Heart right ventricle (tissue), 16 donors: ENCODE measurements at regions of chr19 and their contacts with region 1.

Region 1: GRCh38 chr19:45972081-45972946 is 1.4 kb downstream of the NOVA2 start:
- DNase-seq: peak in 1 of 2 donors; percentile 45
- ATAC-seq: peak; percentile 13 to 83 (median 62)
- H3K4me3 ChIP-seq: peak overlapping the region; percentile 25 to 63 (median 52)
- H3K27ac ChIP-seq: peak overlapping the region; percentile 58 to 93 (median 81)
- H3K4me1 ChIP-seq: peaks cover 0 to 25% (median 12%) of the 10 kb centered on the region in 9 donors
- H3K27me3 ChIP-seq: peaks cover 0 to 82% (median 59%) of the 10 kb centered on the region in 7 donors
- CTCF ChIP-seq: no peak

Region 2: DNA sequence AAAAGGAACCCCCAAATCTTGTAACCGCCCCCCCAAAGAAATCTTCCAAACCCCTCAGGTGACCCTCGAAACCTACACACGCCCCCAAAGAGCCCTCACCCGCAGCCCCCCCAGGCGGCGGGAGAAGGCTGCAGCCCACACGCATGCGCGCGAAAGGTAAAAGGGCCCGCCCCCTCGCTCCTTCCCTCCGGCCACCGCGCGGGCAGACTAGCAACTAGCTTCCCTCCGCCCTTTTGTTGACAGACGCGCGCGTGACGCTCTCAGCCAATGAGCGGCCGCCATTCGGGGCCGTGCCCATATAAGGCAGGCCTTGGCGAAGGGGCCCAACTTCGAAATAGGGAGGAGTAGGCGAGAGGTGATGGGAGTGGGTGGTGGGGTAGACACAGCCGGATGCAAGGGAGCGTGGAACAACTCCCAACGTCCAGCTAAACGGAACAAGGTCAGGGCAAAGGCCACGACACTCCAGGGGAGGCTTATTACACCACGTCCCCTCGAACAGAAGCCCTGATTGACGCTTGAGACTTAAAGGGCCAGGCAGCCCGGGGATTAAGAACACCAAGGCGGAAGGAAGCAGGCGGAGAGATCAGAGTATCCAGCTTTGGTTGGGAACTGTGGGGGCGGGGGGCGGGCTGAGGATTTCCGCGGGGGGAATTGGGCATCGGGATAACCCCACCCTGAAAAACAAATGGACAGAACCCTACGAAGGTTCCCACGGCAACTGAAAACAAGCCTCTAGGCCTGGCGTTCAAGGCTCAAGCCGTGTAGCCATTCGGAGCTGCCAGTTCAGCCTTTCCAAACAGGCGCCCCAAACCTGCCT is 254.9 kb before region 1 on chr19:
- intact Hi-C with region 1: no loop called
- DNase-seq: peak; percentile 99
- ATAC-seq: peak; percentile 97 to 99 (median 98)
- H3K4me3 ChIP-seq: peak overlapping the region; percentile 48 to 87 (median 64)
- H3K27ac ChIP-seq: peak overlapping the region; percentile 74 to 97 (median 94)
- H3K4me1 ChIP-seq: peaks cover 3 to 35% (median 20%) of the 10 kb centered on the region in 9 donors
- H3K27me3 ChIP-seq: no peaks in the 10 kb centered on the region
- CTCF ChIP-seq: peak in 5 of 9 donors; percentile 7 to 41 (median 14)

Region 3: DNA sequence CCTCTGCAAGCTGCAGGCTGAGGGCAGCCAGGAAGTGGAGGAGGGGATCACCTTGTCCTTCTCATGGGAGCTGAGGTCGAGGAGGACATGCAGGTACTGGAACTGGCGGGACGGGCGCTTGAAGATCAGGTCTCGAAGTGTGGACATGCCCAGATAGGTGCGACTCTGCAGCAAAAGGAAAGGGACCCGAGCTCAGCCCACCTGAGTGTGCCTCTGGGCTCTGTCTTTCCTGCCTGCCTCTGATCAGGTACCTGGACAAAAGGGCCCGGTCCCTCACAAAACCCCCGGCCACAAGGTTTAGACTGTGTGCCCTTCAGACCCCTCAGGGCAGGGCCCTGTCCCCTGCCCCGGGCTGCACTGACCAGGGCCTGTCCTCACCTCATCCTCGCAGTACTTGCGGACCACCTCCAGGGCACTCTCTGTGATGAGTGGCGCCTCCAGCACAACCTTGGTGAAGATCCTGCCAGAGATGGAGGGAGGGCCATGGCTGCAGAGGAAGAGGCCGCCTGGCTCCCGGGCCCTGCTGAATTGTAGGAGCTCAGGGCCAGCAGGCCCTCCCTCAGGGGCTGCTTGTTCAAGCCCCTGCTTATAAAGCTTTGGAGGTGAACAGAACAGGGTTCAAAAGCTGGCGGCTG is 144.7 kb before region 1 on chr19:
- intact Hi-C with region 1: no loop called
- DNase-seq: no peak
- ATAC-seq: no peak
- H3K4me3 ChIP-seq: no peak overlapping the region
- H3K27ac ChIP-seq: no peak overlapping the region
- H3K4me1 ChIP-seq: peaks cover 0 to 3% (median 0%) of the 10 kb centered on the region in 9 donors
- H3K27me3 ChIP-seq: no peaks in the 10 kb centered on the region
- CTCF ChIP-seq: no peak

Region 4: DNA sequence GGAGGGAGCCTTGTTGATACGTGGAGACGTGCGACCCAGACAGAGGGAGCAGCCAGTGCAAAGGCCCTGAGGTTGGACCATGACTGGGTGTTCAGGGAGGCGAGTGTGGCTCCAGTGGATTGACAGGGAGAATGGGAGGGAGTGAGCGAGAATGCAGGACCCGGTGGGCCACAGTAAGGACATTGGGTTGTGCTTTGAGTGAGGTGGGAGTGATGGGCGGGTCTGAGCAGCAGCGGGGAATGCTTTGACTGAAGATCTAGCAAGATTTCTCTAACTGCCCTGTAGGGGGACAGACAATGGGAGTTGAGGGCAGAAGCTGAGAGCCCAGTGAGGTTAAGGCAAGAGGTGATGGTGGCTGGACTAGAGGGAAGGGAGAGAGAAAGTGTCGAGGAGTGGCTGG is 50.0 kb before region 1 on chr19:
- intact Hi-C with region 1: loop called in 1 of 10 experiments (anchors 2 kb)
- DNase-seq: no peak
- ATAC-seq: no peak
- H3K4me3 ChIP-seq: no peak overlapping the region
- H3K27ac ChIP-seq: no peak overlapping the region
- H3K4me1 ChIP-seq: no peaks in the 10 kb centered on the region
- H3K27me3 ChIP-seq: peaks cover 0 to 24% (median 13%) of the 10 kb centered on the region in 7 donors
- CTCF ChIP-seq: no peak

Region 5: GRCh38 chr19:45955905-45956608 is 16.3 kb before region 1 on chr19:
- intact Hi-C with region 1: loop called in 2 of 10 experiments (anchors 1 to 2 kb)
- DNase-seq: peak; percentile 64 to 90
- ATAC-seq: peak; percentile 85 to 93 (median 89)
- H3K4me3 ChIP-seq: no peak overlapping the region
- H3K27ac ChIP-seq: peak overlapping the region; percentile 33 to 84 (median 77)
- H3K4me1 ChIP-seq: peaks cover 18 to 72% (median 55%) of the 10 kb centered on the region in 9 donors
- H3K27me3 ChIP-seq: peaks cover 0 to 54% (median 33%) of the 10 kb centered on the region in 7 donors
- CTCF ChIP-seq: no peak

Region 6: DNA sequence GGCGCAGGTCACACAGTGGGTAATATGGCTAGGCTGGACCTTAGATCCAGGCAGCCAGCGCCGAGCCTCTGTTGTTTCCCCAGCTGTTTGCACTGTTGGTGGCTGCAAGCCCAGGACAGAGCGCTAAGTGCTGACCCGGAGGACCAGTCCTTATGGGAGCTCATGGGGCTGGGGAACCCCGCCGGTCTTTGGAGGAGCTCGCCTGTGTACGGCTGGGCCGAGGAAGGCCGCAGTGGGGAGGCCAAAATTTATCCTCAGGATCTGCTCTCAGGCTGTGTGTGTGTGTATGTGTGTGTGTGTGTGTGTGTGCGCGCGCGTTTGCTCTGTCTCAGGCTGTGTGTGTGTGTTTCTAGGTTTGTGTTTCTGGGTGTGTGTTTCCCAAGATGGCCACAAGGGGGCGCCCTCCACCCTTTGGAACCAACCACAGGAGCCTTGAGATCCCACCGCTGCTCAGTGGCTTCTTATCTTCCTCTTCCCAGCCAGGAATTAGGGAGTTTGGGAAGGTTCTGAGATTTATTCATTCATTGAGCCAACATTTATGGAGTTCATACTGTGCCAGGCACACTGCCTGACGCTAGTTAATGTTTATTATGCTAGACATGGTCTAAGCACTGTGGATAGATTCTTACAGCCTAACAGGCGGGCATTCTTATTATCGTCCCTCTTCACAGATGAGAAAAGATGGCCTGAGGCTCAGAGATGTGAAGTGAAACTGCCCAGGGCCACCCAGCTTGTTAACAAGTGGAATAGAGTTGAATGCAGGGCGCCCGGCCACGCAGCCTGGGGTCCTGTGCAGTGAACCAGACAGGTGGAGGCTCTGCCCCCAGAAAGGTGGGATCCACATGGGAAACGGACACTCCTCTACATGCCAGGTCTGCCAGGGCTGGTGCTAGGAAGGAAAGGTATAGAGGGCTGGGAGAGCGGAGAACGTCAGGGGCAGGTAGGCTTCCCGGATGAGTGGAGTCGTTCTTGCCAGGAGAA is 37.5 kb after region 1 on chr19:
- intact Hi-C with region 1: no loop called
- DNase-seq: peak; percentile 64 to 65
- ATAC-seq: peak; percentile 60 to 87 (median 80)
- H3K4me3 ChIP-seq: no peak overlapping the region
- H3K27ac ChIP-seq: no peak overlapping the region
- H3K4me1 ChIP-seq: peaks cover 0 to 10% (median 5%) of the 10 kb centered on the region in 9 donors
- H3K27me3 ChIP-seq: peaks cover 0 to 31% (median 21%) of the 10 kb centered on the region in 7 donors
- CTCF ChIP-seq: peak; percentile 79 to 90 (median 85)